Transverse colon (tissue), 4 donors: ENCODE measurements at regions of chr13 and their contacts with region 1.

Region 1: DNA sequence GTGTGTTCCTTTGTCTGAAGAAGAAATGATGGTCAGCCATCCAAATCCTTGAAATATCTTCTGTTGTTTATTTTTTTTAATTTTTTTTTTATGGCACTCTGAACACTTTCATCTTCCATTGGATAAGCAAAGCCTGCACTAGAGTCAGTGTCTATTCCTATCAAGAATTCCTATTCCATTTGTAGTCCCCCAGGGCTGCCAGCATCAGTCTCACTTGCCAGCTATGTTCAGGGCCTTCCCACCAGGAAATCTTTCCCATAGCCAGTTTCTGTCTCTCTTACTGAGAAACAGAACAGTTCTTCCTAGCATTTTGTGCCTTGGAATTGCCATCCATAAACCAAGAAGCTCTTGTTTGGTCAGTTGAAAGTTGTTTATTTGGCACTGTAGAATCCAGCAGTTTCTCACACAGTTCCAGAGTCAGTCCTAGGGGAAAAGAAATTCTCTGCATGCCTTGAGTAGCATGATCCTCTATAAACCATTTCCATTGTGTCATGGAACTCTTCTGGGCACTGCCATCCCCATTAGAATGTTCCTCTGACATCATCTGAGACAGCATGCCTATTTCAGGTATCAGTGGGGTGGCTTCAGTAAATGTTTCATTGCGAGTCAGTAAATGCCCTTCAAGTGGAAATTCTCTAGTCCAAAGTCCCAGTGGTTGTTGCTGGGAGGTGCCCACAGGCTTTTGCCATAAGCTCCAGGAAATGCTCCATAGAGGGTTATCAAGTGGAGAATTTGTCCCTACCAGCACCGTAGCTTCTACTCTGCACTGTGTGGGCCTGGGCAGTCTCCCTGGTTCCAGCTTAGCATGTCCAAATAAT is 18.7 kb upstream of the SPRYD7 start:
- DNase-seq: peak; percentile 47
- H3K4me3 ChIP-seq: no peak overlapping the region
- H3K27ac ChIP-seq: peak overlapping the region; percentile 63 to 79 (median 69)
- H3K4me1 ChIP-seq: peaks cover 5 to 27% (median 13%) of the 10 kb centered on the region in 4 donors
- H3K27me3 ChIP-seq: no peaks in the 10 kb centered on the region
- CTCF ChIP-seq: peak in 2 of 5 experiments; percentile 32 to 50
- EP300 ChIP-seq: no peak
- POLR2A ChIP-seq: no peak

Region 2: DNA sequence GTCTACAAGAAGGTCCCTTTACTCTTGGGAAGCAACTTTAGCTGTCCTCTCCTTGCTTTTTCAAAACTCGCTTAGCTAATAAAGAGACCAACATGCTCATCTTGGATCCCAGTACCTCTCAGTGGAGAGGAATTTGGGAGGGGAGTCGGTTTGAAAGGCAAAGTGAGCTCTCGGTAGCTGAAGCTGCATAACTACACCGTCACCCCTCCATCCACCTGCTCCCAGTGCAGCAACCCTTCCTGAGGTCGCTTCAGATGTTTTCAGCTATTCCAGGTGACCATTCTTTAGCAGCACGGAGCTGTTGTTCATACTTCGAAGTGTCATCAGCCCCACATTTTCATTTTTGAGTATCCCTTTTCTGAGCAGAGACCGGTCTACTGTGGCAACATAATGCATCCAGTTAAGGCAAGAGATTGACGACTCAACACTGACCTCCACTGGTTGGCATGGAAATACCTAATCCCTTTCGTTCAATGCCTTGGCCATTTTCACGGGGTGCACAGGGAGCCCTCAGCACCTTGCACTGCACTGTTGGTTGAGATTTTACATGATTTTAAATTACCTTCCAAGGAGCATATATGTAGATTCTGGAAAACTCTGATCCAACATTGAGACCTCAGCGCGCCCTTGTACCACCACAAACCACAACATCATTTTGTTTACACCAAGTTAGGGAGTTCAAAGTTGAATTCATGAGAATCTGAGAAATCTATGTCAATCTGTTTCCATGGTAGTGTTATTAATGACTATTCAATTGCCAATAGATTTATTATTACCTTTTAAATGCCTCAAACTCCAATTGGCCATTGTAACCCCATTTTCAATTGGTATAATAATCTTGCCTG is 846.4 kb after region 1 on chr13:
- in situ Hi-C with region 1: loop called in 1 of 4 experiments (anchors 25 kb)
- intact Hi-C with region 1: no loop called
- DNase-seq: peak; percentile 65
- H3K4me3 ChIP-seq: no peak overlapping the region
- H3K27ac ChIP-seq: peak overlapping the region in 1 of 4 donors; percentile 2
- H3K4me1 ChIP-seq: peaks cover 0 to 12% (median 1%) of the 10 kb centered on the region in 4 donors
- H3K27me3 ChIP-seq: no peaks in the 10 kb centered on the region
- CTCF ChIP-seq: peak; percentile 61 to 68 (median 68)
- EP300 ChIP-seq: no peak
- POLR2A ChIP-seq: no peak

Region 3: GRCh38 chr13:51070005-51070649 is 1115.2 kb after region 1 on chr13:
- in situ Hi-C with region 1: loop called in 1 of 4 experiments (anchors 25 kb)
- intact Hi-C with region 1: no loop called
- DNase-seq: peak; percentile 84
- H3K4me3 ChIP-seq: no peak overlapping the region
- H3K27ac ChIP-seq: no peak overlapping the region
- H3K4me1 ChIP-seq: peaks cover 0 to 4% (median 2%) of the 10 kb centered on the region in 4 donors
- H3K27me3 ChIP-seq: no peaks in the 10 kb centered on the region
- CTCF ChIP-seq: peak; percentile 84 to 97 (median 92)
- EP300 ChIP-seq: no peak
- POLR2A ChIP-seq: no peak